Right cardiac atrium (tissue), 5 donors: ENCODE measurements at regions of chr15 and their contacts with region 1.

Region 1: GRCh38 chr15:78234515-78235040 is at the start of gene ACSBG1:
- DNase-seq: no peak
- ATAC-seq: no peak
- H3K4me3 ChIP-seq: no peak within 1 kb of the TSS
- H3K27ac ChIP-seq: no peak within 1 kb of the TSS
- H3K4me1 ChIP-seq: no peaks in the 10 kb centered on the region
- H3K27me3 ChIP-seq: no peaks in the 10 kb centered on the region
- total RNA-seq, gene ACSBG1: 0.35 to 0.51 (median 0.42) TPM in 3 of 4 donors, not detected in the other

Region 2: GRCh38 chr15:78182821-78183220 is 51.8 kb before region 1 on chr15:
- intact Hi-C with region 1: loop called in 2 of 4 experiments (anchors 5 kb)
- DNase-seq: no peak
- ATAC-seq: no peak
- H3K4me3 ChIP-seq: no peak overlapping the region
- H3K27ac ChIP-seq: no peak overlapping the region
- H3K4me1 ChIP-seq: no peaks in the 10 kb centered on the region
- H3K27me3 ChIP-seq: no peaks in the 10 kb centered on the region

Region 3: GRCh38 chr15:78195735-78196201 is 38.8 kb before region 1 on chr15:
- intact Hi-C with region 1: loop called in 1 of 4 experiments (anchors 5 kb)
- DNase-seq: no peak
- ATAC-seq: peak; percentile 62 to 67
- H3K4me3 ChIP-seq: no peak overlapping the region
- H3K27ac ChIP-seq: no peak overlapping the region
- H3K4me1 ChIP-seq: no peaks in the 10 kb centered on the region
- H3K27me3 ChIP-seq: no peaks in the 10 kb centered on the region